ENCODE measurements at regions of chr16 and their contacts with region 1.

Region 1: DNA sequence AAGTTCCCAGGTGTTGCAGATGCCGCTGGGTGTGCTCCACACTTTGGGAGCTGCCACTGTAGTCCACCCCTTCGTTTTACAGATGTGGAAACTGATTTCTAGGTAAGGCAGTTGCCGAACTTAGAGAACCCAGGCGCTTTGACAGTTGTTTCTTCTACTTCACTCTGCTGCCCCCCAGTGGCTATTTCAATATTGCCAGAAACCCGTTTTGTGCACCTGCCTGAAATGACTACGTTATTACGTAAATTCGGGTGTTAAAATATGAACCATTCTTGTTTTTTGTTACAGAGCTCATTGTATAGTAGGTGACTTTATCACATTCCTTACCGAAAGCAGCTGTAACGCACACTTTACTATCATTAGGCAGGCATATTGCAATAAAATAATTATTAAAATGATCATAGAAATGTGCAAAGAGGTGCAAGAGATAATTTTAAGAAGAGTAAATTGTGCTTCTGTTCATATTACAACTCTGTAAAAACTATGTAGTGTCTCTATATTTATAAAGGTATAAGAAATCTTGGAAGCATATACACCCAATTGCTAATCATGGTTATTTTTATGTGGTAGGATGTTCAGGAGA is 44.9 kb downstream of the OTOA start:
- DNase-seq: peak; percentile 77 to 84 (median 79)
- H3K4me3 ChIP-seq: no peak overlapping the region
- H3K4me3 Mint-ChIP-seq: no peak overlapping the region
- H3K27ac ChIP-seq: no peak overlapping the region
- H3K27ac Mint-ChIP-seq: no peak overlapping the region
- H3K4me1 ChIP-seq: peaks cover 7% of the 10 kb centered on the region
- H3K4me1 Mint-ChIP-seq: peaks cover 0 to 5% (median 3%) of the 10 kb centered on the region in 4 donors
- H3K27me3 ChIP-seq: no peaks in the 10 kb centered on the region
- H3K27me3 Mint-ChIP-seq: peaks cover 0 to 1% of the 10 kb centered on the region in 2 donors

Region 2: DNA sequence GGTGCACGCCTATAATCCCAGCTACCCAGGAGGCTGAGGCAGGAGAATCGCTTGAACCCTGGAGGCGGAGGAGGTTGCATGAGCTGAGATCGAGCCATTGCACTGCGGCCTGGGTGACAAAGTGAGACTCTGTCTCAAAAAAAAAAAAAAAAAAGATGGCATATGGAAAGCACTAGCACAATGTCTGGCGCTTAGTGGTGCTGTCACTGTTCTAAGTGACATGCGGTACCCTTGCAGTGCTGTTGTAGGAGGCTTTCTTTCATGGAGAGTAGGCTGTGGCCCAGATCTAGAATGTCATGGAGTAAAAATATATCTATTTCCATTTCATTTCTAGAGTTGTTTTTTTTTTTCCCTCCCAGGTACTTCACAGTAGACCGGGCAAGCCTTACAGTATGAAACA is 123.8 kb before region 1 on chr16:
- CTCF ChIA-PET with region 1: interaction called, 37 read pairs
- POLR2A ChIA-PET with region 1: interaction called, 3 read pairs
- intact Hi-C with region 1: loop called (anchors 1 kb)
- DNase-seq: no peak
- H3K4me3 ChIP-seq: no peak overlapping the region
- H3K4me3 Mint-ChIP-seq: no peak overlapping the region
- H3K27ac ChIP-seq: no peak overlapping the region
- H3K27ac Mint-ChIP-seq: no peak overlapping the region
- H3K4me1 ChIP-seq: no peaks in the 10 kb centered on the region
- H3K4me1 Mint-ChIP-seq: peaks cover 0 to 5% (median 2%) of the 10 kb centered on the region in 4 donors
- H3K27me3 ChIP-seq: no peaks in the 10 kb centered on the region
- H3K27me3 Mint-ChIP-seq: peaks cover 0 to 1% of the 10 kb centered on the region in 2 donors

Region 3: DNA sequence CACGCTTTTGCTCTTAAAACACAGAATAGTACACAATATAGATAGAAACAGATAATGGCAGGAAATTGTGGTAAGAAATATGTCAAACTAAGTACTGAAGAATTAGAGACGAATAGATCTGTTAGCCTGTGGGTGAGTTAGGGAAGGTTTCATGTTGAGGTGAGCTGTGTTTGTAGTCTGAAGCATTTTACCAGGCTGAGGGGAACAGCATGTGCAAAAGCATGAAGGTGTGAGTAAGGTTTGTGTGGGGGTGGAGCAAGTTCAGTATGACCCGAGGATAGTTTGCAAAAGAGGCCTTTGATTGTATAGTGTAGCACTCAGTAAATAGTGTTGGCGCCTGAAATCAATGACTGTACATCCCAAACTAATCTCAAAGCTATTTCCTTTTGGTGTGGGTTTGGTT is 70.0 kb before region 1 on chr16:
- CTCF ChIA-PET with region 1: interaction called, 31 read pairs
- POLR2A ChIA-PET with region 1: interaction called, 5 read pairs
- intact Hi-C with region 1: no loop called
- DNase-seq: peak in 4 of 5 donors; percentile 25 to 41 (median 32)
- H3K4me3 ChIP-seq: no peak overlapping the region
- H3K4me3 Mint-ChIP-seq: peak overlapping the region in 7 of 8 donors; percentile 22 to 79 (median 59)
- H3K27ac ChIP-seq: no peak overlapping the region
- H3K27ac Mint-ChIP-seq: peak overlapping the region; percentile 10 to 92 (median 70)
- H3K4me1 ChIP-seq: peaks cover 38% of the 10 kb centered on the region
- H3K4me1 Mint-ChIP-seq: peaks cover 19 to 50% (median 37%) of the 10 kb centered on the region in 4 donors
- H3K27me3 ChIP-seq: no peaks in the 10 kb centered on the region
- H3K27me3 Mint-ChIP-seq: no peaks in the 10 kb centered on the region

Region 4: DNA sequence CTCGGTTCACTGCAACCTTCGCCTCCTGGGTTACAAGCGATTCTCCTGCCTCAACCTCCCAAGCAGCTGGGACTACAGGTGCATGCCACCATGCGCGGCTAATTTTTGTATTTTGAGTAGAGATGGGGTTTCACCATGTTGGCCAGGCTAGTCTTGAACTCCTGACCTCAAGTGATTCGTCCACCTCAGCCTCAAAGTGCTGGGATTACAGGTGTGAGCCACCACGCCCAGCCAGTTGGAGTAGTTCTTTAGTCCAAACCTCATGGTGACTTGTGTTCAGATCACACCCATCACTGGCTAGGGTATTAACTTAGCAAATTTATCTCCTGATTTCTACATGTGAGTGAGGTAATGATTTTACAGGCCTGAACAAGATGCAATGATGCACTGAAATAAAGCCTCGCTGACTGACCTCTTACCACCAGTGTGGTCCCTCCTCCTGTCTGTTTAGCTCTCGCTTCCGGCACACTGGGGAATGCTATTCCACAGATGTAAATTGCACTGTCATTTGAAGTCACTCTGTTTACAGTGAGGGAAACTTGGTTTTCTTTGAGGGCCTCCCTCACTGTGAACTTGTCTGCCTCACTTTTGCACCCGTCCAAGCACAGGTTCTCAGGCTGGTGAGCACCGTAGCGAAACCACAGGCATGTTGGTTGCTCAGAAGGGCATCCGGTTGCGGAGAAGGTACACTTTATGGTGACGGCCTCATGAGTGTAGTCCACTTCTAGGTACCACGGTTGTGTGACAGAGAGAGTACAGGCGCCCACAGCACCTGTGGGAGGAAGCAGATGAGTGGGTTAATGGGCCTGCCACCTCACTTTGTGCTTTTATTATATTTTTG is 61.7 kb before region 1 on chr16:
- CTCF ChIA-PET with region 1: interaction called, 31 read pairs
- POLR2A ChIA-PET with region 1: no interaction called
- intact Hi-C with region 1: no loop called
- DNase-seq: peak; percentile 73 to 89 (median 79)
- H3K4me3 ChIP-seq: peak overlapping the region in 1 of 2 donors; percentile 4
- H3K4me3 Mint-ChIP-seq: peak overlapping the region; percentile 68 to 96 (median 81)
- H3K27ac ChIP-seq: peak overlapping the region; percentile 61
- H3K27ac Mint-ChIP-seq: peak overlapping the region; percentile 91 to 98 (median 95)
- H3K4me1 ChIP-seq: peaks cover 60% of the 10 kb centered on the region
- H3K4me1 Mint-ChIP-seq: peaks cover 32 to 66% (median 49%) of the 10 kb centered on the region in 4 donors
- H3K27me3 ChIP-seq: no peaks in the 10 kb centered on the region
- H3K27me3 Mint-ChIP-seq: no peaks in the 10 kb centered on the region

Region 5: GRCh38 chr16:21656795-21657768 is 51.5 kb before region 1 on chr16:
- CTCF ChIA-PET with region 1: interaction called, 161 read pairs
- POLR2A ChIA-PET with region 1: interaction called, 9 read pairs
- intact Hi-C with region 1: loop called (anchors 1 kb)
- DNase-seq: peak; percentile 60 to 69 (median 66)
- H3K4me3 ChIP-seq: no peak overlapping the region
- H3K4me3 Mint-ChIP-seq: peak overlapping the region in 5 of 8 donors; percentile 32 to 59 (median 49)
- H3K27ac ChIP-seq: no peak overlapping the region
- H3K27ac Mint-ChIP-seq: peak overlapping the region in 6 of 7 donors; percentile 1 to 86 (median 75)
- H3K4me1 ChIP-seq: peaks cover 32% of the 10 kb centered on the region
- H3K4me1 Mint-ChIP-seq: peaks cover 31 to 50% (median 40%) of the 10 kb centered on the region in 4 donors
- H3K27me3 ChIP-seq: no peaks in the 10 kb centered on the region
- H3K27me3 Mint-ChIP-seq: no peaks in the 10 kb centered on the region

Region 6: GRCh38 chr16:21663889-21664647 is 44.6 kb before region 1 on chr16 and contains the start of gene OTOA:
- CTCF ChIA-PET with region 1: interaction called, 161 read pairs
- POLR2A ChIA-PET with region 1: no interaction called
- intact Hi-C with region 1: loop called (anchors 2 kb)
- DNase-seq: peak in 3 of 5 donors; percentile 17 to 36 (median 17)
- H3K4me3 ChIP-seq: peak within 1 kb of the TSS in 1 of 2 donors; percentile 28
- H3K4me3 Mint-ChIP-seq: peak within 1 kb of the TSS; percentile 52 to 83 (median 72)
- H3K27ac ChIP-seq: no peak within 1 kb of the TSS
- H3K27ac Mint-ChIP-seq: peak within 1 kb of the TSS in 5 of 7 donors; percentile 53 to 74 (median 57)
- H3K4me1 ChIP-seq: peaks cover 25% of the 10 kb centered on the region
- H3K4me1 Mint-ChIP-seq: peaks cover 13 to 38% (median 20%) of the 10 kb centered on the region in 4 donors
- H3K27me3 ChIP-seq: no peaks in the 10 kb centered on the region
- H3K27me3 Mint-ChIP-seq: peaks cover 0 to 1% of the 10 kb centered on the region in 2 donors
- total RNA-seq, gene OTOA: 0.11 to 0.17 TPM

Region 7: GRCh38 chr16:21698169-21699032 is 10.2 kb before region 1 on chr16:
- CTCF ChIA-PET with region 1: interaction called, 10 read pairs
- POLR2A ChIA-PET with region 1: no interaction called
- intact Hi-C with region 1: no loop called
- DNase-seq: no peak
- H3K4me3 ChIP-seq: no peak overlapping the region
- H3K4me3 Mint-ChIP-seq: no peak overlapping the region
- H3K27ac ChIP-seq: no peak overlapping the region
- H3K27ac Mint-ChIP-seq: no peak overlapping the region
- H3K4me1 ChIP-seq: no peaks in the 10 kb centered on the region
- H3K4me1 Mint-ChIP-seq: no peaks in the 10 kb centered on the region
- H3K27me3 ChIP-seq: no peaks in the 10 kb centered on the region
- H3K27me3 Mint-ChIP-seq: no peaks in the 10 kb centered on the region